ENCODE measurements at regions of chr2 and their contacts with region 1.

Region 1: GRCh38 chr2:209334198-209335017 is 89.4 kb upstream of the MAP2 start:
- DNase-seq: peak; percentile 25 to 65
- H3K4me3 ChIP-seq: no peak overlapping the region
- H3K27ac ChIP-seq: no peak overlapping the region
- H3K4me1 ChIP-seq: peaks cover 0 to 4% (median 0%) of the 10 kb centered on the region in 4 donors
- H3K27me3 ChIP-seq: no peaks in the 10 kb centered on the region
- CTCF ChIP-seq: peak; percentile 81 to 91

Region 2: DNA sequence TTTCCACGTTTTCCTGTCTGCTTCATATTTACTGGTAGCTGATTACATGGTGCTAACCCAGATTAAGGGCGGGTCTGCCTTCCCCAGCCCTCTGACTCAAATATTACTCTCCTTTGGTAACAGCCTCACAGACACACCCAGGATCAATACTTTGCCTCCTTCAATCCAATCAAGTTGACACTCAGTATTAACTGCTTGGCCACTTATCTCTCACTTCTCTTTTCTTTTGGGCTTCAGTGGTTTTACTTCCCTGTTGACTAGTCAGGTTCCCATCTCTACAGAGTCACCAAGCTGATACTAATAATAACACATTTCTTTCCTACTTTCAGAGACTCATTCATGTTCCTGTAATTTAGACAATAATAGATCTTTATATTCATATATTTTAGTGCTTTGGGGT is 212.7 kb before region 1 on chr2:
- intact Hi-C with region 1: no loop called
- DNase-seq: no peak
- H3K4me3 ChIP-seq: no peak overlapping the region
- H3K27ac ChIP-seq: no peak overlapping the region
- H3K4me1 ChIP-seq: no peaks in the 10 kb centered on the region
- H3K27me3 ChIP-seq: no peaks in the 10 kb centered on the region
- CTCF ChIP-seq: no peak

Region 3: GRCh38 chr2:209351636-209352035 is 17.2 kb after region 1 on chr2:
- intact Hi-C with region 1: no loop called
- DNase-seq: no peak
- H3K4me3 ChIP-seq: no peak overlapping the region
- H3K27ac ChIP-seq: no peak overlapping the region
- H3K4me1 ChIP-seq: no peaks in the 10 kb centered on the region
- H3K27me3 ChIP-seq: no peaks in the 10 kb centered on the region
- CTCF ChIP-seq: no peak

Region 4: DNA sequence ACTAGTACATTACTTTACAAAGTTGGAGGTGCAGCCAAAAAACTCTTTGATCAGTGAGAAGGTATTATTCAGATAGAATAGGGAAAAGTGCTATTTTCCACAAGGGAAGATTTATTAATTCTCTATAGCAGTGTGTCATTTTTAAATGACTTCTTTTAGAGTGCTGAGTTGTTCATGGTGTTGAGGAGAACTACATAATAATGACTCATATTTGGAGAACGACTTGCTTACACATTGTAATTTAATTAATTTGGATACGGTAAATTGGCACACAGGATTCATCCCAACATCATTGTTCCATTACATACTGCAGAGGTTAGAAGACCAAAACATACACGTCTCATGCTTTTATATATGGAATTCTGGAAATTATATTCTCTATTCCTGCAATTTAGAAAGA is 67.4 kb after region 1 on chr2:
- intact Hi-C with region 1: no loop called
- DNase-seq: no peak
- H3K4me3 ChIP-seq: no peak overlapping the region
- H3K27ac ChIP-seq: no peak overlapping the region
- H3K4me1 ChIP-seq: no peaks in the 10 kb centered on the region
- H3K27me3 ChIP-seq: no peaks in the 10 kb centered on the region
- CTCF ChIP-seq: no peak

Region 5: GRCh38 chr2:209419036-209419435 is 84.6 kb after region 1 on chr2:
- intact Hi-C with region 1: loop called (anchors 5 kb)
- DNase-seq: no peak
- H3K4me3 ChIP-seq: no peak overlapping the region
- H3K27ac ChIP-seq: no peak overlapping the region
- H3K4me1 ChIP-seq: peaks cover 0 to 5% (median 0%) of the 10 kb centered on the region in 4 donors
- H3K27me3 ChIP-seq: no peaks in the 10 kb centered on the region
- CTCF ChIP-seq: no peak

Region 6: DNA sequence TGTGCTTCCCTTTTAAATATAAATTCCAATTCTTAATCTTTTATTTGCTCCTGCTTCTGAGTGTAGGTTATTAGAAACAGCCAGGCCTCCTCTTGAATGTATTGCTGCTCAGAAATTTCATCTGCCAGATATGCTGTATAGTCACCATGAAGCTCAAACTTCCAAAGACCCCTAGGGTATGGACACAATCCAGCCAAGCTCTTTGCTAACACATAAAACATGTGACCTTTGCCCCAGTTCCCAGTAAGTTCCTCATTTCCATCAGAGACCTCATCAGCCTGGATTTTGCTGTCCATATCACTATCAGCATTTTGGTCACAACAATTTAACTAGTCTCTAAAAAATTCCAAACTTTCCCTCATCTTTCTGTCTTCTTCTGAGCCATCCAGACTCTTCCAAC is 164.7 kb after region 1 on chr2:
- intact Hi-C with region 1: no loop called
- DNase-seq: no peak
- H3K4me3 ChIP-seq: no peak overlapping the region
- H3K27ac ChIP-seq: no peak overlapping the region
- H3K4me1 ChIP-seq: peaks cover 0 to 25% (median 10%) of the 10 kb centered on the region in 4 donors
- H3K27me3 ChIP-seq: no peaks in the 10 kb centered on the region
- CTCF ChIP-seq: no peak

Measured in tibial artery (tissue), 4 donors.